ENCODE measurements at regions of chr22 and their contacts with region 1.

Region 1: GRCh38 chr22:37676736-37677492 is 1.5 kb downstream of the LGALS1 start:
- DNase-seq: peak; percentile 87
- H3K4me3 ChIP-seq: peak overlapping the region; percentile 93
- H3K27me3 ChIP-seq: no peaks in the 10 kb centered on the region
- CTCF ChIP-seq: no peak

Region 2: DNA sequence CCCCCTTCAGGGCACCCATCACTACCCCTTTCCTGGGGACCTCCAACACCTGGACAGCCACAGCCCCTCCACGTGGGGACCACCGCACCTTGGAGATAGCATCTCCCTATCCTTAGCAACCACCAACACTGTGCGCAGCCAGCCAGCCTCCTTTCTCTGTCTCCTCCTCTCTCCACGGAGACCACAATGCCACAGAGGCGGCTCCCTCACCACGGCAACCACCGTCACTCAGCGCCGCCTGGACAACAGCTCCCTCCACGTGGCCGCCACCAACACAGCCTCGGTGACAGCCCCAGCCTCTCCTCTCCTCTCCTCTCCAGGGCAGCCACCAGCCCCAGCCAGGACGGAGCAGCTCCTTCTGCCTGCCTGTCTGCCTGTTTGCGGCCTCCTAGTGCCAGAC is 260.1 kb before region 1 on chr22:
- CTCF ChIA-PET with region 1: no interaction called
- POLR2A ChIA-PET with region 1: no interaction called
- DNase-seq: no peak
- H3K4me3 ChIP-seq: no peak overlapping the region
- H3K27me3 ChIP-seq: peaks cover 15% of the 10 kb centered on the region
- CTCF ChIP-seq: no peak

Region 3: GRCh38 chr22:37623075-37624016 is 53.6 kb before region 1 on chr22:
- CTCF ChIA-PET with region 1: interaction called, 17 read pairs
- POLR2A ChIA-PET with region 1: interaction called, 3 read pairs
- DNase-seq: no peak
- H3K4me3 ChIP-seq: no peak overlapping the region
- H3K27me3 ChIP-seq: no peaks in the 10 kb centered on the region
- CTCF ChIP-seq: peak; percentile 93

Region 4: DNA sequence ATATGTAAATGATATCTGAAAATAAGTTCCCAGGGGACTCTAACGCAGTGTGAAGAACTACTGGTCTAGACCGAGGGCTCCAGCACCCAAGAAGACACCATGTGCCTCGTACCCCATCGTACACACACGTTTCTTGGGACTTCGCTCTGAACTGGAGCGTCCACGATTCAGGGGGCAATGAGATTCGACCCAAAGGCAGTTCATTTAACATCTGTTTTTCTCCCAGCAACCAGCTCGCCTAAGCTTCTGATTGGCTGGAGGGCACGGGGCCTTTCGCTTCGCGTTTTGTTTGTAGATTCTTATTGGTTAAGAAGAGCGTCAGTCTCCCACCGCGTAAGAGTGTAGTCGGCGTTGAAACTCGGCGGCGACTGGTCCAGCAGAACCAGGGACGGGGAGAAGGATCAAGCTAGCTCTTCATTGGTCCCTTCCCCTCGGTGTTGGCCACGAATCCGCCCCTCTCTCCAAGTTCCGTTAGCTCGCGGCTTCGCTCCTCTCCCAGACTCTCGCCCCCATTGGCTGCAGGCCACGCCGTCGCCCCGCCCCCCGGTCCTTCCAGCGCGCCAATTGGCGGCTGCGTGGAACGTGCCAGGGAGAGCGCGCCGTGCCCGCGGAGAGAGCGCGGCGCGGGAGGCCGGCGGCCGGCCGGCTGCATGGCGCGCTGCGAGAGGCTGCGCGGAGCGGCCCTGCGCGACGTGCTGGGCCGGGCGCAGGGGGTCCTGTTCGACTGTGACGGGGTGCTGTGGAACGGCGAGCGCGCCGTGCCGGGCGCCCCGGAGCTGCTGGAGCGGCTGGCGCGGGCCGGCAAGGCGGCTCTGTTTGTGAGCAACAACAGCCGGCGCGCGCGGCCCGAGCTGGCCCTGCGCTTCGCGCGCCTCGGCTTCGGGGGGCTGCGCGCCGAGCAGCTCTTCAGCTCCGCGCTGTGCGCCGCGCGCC is 18.5 kb before region 1 on chr22 and contains the start of gene PDXP:
- CTCF ChIA-PET with region 1: interaction called, 133 read pairs
- POLR2A ChIA-PET with region 1: interaction called, 16 read pairs
- DNase-seq: peak; percentile 99
- H3K4me3 ChIP-seq: peak within 1 kb of the TSS; percentile 72
- H3K27me3 ChIP-seq: no peaks in the 10 kb centered on the region
- CTCF ChIP-seq: no peak
- polyA plus RNA-seq, gene PDXP: 16.4 and 24.0 TPM in 2 replicates

Region 5: DNA sequence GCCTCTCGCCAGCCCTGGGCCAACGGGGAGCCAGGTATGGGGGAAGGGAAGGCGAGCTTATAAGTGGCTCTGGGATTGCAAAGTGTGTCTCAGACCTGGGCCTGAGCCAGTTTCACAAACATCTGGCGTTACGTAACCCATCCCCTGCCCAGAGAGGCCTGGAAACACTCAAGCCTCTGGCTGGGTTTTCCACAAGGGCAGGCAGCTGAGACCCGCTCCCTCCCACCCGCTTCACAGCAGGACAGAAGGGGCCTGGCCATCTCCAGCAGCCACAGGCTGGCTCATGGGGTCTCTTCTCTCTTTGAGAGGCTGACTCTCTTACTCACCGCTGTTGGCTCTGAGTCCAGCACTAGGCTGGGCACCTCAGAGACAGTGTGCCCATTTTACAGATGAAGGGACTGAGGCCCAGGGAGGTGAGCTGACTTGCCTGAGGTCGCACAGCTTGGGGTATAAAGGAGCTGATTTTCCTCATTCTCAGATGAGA is 64.4 kb after region 1 on chr22:
- CTCF ChIA-PET with region 1: interaction called, 10 read pairs
- POLR2A ChIA-PET with region 1: no interaction called
- DNase-seq: peak; percentile 94
- H3K4me3 ChIP-seq: no peak overlapping the region
- H3K27me3 ChIP-seq: no peaks in the 10 kb centered on the region; the same call in 1 of the 2 replicates
- CTCF ChIP-seq: no peak